ENCODE measurements at regions of chr20 and their contacts with region 1.

Region 1: DNA sequence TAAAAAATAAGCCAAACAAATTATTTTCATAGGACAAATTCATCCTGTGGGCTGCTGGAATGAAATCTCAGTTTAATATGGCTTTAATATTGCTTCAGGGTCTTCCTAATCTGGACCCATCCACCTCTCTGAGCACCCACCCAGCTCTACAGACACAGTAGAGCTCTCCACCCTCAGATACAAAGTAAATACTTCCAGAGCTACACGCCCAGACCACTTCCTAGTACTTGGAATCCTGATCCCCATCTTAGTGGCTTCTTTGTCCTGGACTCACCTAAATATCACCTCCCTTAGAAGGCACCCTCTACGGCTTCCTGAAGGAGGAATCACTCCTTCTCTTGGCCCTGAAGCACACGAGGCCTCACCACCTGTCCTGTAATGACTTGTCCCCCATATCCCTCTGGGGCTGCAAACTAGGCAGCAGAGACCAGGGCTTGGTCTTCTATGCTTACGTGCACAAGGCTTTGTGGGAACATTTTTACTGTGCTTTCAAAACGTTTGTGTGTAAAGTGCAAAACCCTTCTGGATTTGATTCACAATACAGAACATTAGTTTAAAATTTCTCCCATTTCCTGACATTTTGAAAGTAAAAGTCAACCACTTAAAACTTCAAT is 2.5 kb downstream of the CTCFL start:
- DNase-seq: no peak

Region 2: DNA sequence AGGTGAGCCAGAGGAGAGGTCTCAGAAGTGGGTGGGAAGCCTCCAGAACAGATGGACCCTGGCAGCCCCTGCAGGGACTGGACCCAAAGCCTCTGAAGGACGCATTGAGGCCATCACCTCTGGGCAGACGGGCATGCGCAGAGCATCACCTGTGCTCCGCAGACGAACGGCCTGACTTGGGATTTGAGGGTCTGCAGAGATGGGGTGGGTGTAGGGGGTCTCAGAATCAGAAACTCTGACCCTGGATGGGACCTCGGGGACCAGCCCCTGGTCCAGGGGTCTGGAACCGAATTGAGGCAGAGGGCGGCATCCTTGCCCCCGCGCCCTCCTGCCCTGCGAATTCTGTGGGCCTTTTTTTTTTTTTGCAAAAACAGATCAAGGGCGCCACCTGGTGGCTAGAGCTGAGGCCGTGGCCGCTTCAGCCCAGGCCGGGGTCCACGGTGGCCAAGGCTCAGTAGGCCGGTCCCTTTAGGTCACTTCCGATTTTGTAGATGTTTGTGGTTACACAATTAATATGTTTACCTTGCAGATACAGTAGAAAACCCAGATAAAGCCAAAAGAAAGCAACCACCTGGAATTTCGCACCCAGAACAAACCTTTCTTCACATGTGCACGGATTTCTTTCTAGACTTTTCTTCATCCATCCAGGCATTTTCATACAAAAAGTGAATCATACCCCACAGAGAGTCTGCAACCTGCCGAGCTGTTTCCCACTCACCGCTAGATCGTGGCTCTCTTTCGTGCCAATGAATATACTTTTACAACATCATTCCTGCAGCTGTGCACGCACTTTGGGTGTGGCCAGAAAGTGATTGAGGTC is 71.8 kb after region 1 on chr20:
- in situ Hi-C with region 1: loop called (anchors 5 kb)
- DNase-seq: peak; percentile 70